ENCODE measurements at regions of chr2 and their contacts with region 1.

Region 1: DNA sequence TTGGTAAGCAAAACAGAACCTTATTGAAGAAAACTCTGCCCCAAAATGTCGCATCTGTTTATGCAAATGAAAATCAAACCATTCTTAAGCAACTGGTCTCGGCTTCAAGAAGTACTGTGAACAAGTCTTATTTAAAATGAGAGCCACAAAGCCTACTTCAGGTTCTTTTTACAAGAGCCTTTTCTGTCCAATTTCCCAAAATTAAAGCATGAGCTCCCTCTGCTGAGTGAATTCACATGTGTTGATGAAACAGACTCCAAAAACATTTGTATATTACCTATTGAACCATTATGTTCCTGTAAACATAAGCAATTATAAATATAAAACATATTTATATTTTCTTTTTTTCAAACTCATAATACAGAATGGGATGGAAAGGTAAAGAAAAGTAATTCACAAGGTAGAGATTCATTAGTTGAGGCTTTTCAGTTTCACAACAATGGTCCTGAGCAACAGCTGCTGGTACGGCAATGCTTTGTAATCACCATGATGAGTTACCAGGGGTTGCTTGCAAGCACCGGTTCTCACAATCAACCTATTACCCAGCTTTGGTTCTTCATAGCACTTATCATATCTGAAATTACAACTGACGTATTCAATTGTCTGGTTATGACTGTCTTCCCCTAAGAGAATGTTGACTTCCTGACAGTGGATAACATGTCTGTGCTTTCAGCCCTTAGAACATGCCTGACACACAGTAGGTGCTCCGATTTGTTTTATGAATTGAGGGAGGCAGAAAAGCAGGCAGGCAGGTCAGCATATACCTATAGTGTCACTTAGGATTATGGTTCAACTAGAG is 108.4 kb upstream of the BZW1 start:
- DNase-seq: no peak
- H3K4me3 Mint-ChIP-seq: peak overlapping the region; percentile 6
- H3K27ac Mint-ChIP-seq: peak overlapping the region; percentile 87
- H3K4me1 Mint-ChIP-seq: peaks cover 47% of the 10 kb centered on the region
- H3K27me3 Mint-ChIP-seq: no peaks in the 10 kb centered on the region

Region 2: GRCh38 chr2:200471324-200471848 is 231.9 kb before region 1 on chr2:
- intact Hi-C with region 1: loop called (anchors 5 kb)
- DNase-seq: no peak
- H3K4me3 Mint-ChIP-seq: no peak overlapping the region
- H3K27ac Mint-ChIP-seq: peak overlapping the region; percentile 75
- H3K4me1 Mint-ChIP-seq: peaks cover 32% of the 10 kb centered on the region
- H3K27me3 Mint-ChIP-seq: no peaks in the 10 kb centered on the region

Region 3: GRCh38 chr2:200509612-200510433 is 193.5 kb before region 1 on chr2 and contains the start of gene KCTD18:
- intact Hi-C with region 1: loop called (anchors 5 kb)
- DNase-seq: peak; percentile 87
- H3K4me3 Mint-ChIP-seq: peak within 1 kb of the TSS; percentile 91
- H3K27ac Mint-ChIP-seq: peak within 1 kb of the TSS; percentile 77
- H3K4me1 Mint-ChIP-seq: peaks cover 11% of the 10 kb centered on the region
- H3K27me3 Mint-ChIP-seq: no peaks in the 10 kb centered on the region
- total RNA-seq, gene KCTD18: 12.3 and 14.1 TPM in 2 replicates

Region 4: GRCh38 chr2:200525882-200526651 is 177.3 kb before region 1 on chr2 and contains the start of gene SGO2:
- intact Hi-C with region 1: loop called (anchors 2 kb)
- DNase-seq: peak; percentile 96
- H3K4me3 Mint-ChIP-seq: peak within 1 kb of the TSS; percentile 98
- H3K27ac Mint-ChIP-seq: peak within 1 kb of the TSS; percentile 94
- H3K4me1 Mint-ChIP-seq: peaks cover 30% of the 10 kb centered on the region
- H3K27me3 Mint-ChIP-seq: no peaks in the 10 kb centered on the region
- total RNA-seq, gene SGO2: 30.3 and 32.3 TPM in 2 replicates

Region 5: DNA sequence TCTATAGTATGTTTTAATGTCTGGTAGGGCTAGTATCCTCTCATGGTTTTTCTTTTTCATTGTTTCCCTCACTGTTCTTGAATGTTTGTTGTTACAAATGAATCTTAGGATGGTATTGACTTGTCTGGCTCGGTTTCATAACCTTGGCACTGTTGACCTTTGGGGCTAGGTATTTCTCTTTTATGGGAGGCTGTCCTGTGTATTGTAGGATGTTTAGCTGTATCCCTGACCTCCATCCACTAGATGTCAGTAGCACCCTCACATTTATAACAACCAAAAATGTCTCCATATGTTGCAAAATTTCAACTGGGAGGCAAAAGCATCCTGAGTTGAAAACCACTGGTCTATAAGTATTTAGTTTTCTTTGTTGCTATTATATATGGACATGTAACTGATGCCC is 124.5 kb before region 1 on chr2:
- intact Hi-C with region 1: loop called (anchors 2 kb)
- DNase-seq: no peak
- H3K4me3 Mint-ChIP-seq: no peak overlapping the region
- H3K27ac Mint-ChIP-seq: no peak overlapping the region
- H3K4me1 Mint-ChIP-seq: peaks cover 20% of the 10 kb centered on the region
- H3K27me3 Mint-ChIP-seq: no peaks in the 10 kb centered on the region

Region 6: GRCh38 chr2:200624658-200625057 is 78.7 kb before region 1 on chr2:
- intact Hi-C with region 1: loop called (anchors 5 kb)
- DNase-seq: no peak
- H3K4me3 Mint-ChIP-seq: no peak overlapping the region
- H3K27ac Mint-ChIP-seq: no peak overlapping the region
- H3K4me1 Mint-ChIP-seq: peaks cover 2% of the 10 kb centered on the region
- H3K27me3 Mint-ChIP-seq: peaks cover 18% of the 10 kb centered on the region

Region 7: DNA sequence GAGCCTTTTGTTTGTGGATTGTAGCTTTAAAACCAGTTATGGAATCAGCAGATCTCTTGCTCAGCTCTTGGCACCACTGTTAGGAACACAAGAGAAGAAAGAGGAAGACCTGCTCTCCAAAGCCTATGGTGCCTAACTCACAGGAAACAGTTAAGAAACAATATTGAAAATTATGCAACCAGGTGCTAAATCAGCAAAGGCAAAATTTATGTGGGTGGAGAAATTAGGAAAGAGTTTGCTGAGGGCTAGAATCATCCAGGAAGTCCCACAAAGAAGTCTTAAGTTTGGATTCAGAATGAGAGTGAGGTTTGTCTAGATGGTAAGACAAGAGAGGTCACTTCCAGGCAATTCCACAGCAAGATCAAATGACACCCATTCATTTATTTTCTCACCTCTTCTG is 68.1 kb before region 1 on chr2:
- intact Hi-C with region 1: no loop called
- DNase-seq: no peak
- H3K4me3 Mint-ChIP-seq: no peak overlapping the region
- H3K27ac Mint-ChIP-seq: no peak overlapping the region
- H3K4me1 Mint-ChIP-seq: no peaks in the 10 kb centered on the region
- H3K27me3 Mint-ChIP-seq: peaks cover 19% of the 10 kb centered on the region

Region 8: DNA sequence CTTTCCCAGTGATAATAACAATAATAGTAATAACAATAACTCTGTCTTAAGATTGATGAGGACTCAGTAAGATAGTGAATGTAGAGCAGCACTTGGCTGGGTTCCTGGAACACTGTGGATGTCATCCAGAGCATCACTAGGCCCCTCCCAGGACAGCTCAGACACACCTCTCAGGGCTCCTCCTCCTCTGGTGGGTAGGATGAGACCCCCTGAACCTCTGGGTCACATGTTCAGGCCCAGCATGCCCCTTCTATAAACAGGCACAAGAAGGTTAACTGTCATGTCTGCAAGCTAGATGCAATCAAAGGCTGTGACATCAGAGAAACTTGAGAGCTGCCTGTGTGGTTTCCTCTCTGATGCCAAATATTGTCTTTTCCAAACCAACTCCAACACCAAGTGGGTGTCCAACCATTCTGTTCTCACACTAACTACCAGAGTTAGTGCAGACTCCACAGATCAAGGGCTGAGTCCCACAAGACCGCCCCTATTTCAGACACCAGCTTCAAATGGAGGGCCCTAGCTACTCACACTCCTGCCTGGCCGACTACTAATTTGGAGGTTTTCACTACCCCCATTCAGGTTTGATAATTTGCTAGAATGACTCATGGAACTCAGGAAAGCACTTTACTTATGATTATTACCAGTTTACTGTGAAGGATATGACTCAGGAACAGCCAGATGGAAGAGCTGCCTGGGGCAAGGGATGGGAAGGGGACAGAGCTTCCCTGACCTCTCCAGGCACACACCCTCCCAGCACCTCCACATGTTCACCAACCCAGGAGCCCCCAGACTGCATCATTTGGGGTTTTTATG is 62.0 kb after region 1 on chr2:
- intact Hi-C with region 1: loop called (anchors 1 kb)
- DNase-seq: peak; percentile 21
- H3K4me3 Mint-ChIP-seq: peak overlapping the region; percentile 41
- H3K27ac Mint-ChIP-seq: peak overlapping the region; percentile 90
- H3K4me1 Mint-ChIP-seq: peaks cover 35% of the 10 kb centered on the region
- H3K27me3 Mint-ChIP-seq: no peaks in the 10 kb centered on the region

Region 9: GRCh38 chr2:201618744-201619662 is 915.7 kb after region 1 on chr2:
- intact Hi-C with region 1: no loop called
- DNase-seq: no peak
- H3K4me3 Mint-ChIP-seq: no peak overlapping the region
- H3K27ac Mint-ChIP-seq: no peak overlapping the region
- H3K4me1 Mint-ChIP-seq: no peaks in the 10 kb centered on the region
- H3K27me3 Mint-ChIP-seq: peaks cover 15% of the 10 kb centered on the region

Measured in activated T-helper 2 cell treated with anti-CD3 and anti-CD28 coated beads, Interferon-gamma antibody, Interleukin-2, Interleukin-4, amounts not matched to agents 10 μg/mL and 5 μg/mL and 100 μg/mL, durations not matched to agents 14 hours and 24 hours and 36 hours (primary cell).